ENCODE measurements at regions of chr9 and their contacts with region 1.

Region 1: DNA sequence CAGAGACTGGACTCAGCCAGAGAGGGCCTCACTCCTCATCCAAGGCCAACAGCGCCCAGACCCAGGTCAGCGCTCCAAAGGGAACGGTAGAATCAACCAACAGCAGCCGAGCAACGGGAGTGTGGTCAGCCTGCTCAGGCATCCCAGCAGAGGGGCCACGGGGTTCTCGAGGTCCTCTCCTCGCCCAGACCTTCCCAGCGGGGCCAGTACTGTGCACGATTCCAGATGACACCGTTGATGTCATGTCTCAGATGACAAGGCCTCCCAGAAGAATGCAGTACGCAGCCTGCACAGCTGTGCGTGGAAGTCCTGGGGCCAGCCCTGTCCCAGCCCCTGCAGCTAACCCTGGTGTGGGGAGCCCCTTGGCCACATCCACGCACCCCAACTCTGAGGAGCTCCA is 141.0 kb upstream of the PPP1R26 start:
- DNase-seq: peak; percentile 67

Region 2: GRCh38 chr9:135350003-135350315 is 11.4 kb after region 1 on chr9:
- intact Hi-C with region 1: loop called in 1 of 2 experiments (anchors 1 kb)
- DNase-seq: no peak

Measured in posterior vena cava (tissue), 2 donors.